Heart left ventricle (tissue), 16 donors: ENCODE measurements at regions of chr5 and their contacts with region 1.

Region 1: DNA sequence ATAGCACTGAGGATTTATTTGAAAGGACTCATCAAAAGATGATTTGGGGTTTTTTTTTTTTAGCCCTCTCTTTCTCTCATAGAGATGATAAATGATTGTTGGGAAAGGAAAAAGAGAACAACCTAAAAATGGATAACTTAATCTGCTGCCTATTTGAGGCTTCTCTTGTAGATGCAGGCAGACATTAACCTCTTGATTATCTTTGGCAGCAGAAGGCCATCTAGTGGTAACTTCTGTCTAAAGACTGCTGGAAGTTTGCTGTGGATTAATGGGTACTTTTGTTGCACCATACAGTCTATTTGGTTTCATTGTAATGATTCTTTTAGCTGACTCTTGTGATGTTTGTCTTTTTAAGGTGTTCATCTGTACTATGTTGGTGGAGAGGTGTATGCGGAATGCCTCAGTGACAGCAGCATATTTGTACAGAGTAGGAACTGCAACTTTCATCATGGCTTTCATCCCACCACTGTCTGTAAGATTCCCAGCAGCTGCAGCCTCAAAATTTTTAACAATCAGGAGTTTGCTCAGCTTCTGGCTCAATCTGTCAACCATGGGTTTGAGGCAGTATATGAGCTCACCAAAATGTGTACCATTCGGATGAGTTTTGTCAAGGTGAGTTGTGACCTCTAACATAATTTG is 18.8 kb downstream of the SMIM32 start:
- DNase-seq: no peak
- ATAC-seq: peak in 2 of 4 donors; percentile 73 to 75
- H3K4me3 ChIP-seq: no peak overlapping the region
- H3K27ac ChIP-seq: no peak overlapping the region
- H3K4me1 ChIP-seq: peaks cover 0 to 3% (median 0%) of the 10 kb centered on the region in 12 donors
- H3K27me3 ChIP-seq: no peaks in the 10 kb centered on the region
- CTCF ChIP-seq: peak; percentile 43 to 76 (median 64)
- POLR2A ChIP-seq: no peak

Region 2: DNA sequence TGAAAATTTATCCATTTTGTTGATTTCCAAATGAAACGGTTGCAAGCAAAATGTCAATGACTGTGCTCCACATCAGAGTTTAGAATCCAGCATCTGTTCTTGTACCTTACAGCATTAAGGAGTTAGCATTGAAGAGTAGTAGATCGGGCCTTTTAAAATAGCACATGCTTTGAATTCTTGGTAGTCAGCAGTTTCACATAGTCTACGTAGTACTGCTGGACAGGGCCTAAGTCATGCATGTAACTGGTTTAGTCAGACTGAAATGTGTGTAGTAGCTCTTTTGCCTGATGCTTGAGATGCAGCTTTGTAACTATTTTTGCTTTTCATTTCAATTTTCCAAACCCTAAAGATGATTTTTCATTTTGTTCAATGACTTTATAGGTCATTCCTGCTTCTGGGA is 239.2 kb before region 1 on chr5:
- intact Hi-C with region 1: loop called in 3 of 10 experiments (anchors 5 to 10 kb)
- DNase-seq: no peak
- ATAC-seq: peak in 2 of 4 donors; percentile 64 to 77
- H3K4me3 ChIP-seq: no peak overlapping the region
- H3K27ac ChIP-seq: no peak overlapping the region
- H3K4me1 ChIP-seq: peaks cover 0 to 9% (median 1%) of the 10 kb centered on the region in 12 donors
- H3K27me3 ChIP-seq: peaks cover 11 to 37% (median 24%) of the 10 kb centered on the region in 9 donors
- CTCF ChIP-seq: no peak
- POLR2A ChIP-seq: no peak

Region 3: GRCh38 chr5:135964670-135965320 is 209.3 kb before region 1 on chr5:
- intact Hi-C with region 1: loop called in 1 of 10 experiments (anchors 5 kb)
- DNase-seq: no peak
- ATAC-seq: peak in 1 of 4 donors; percentile 45
- H3K4me3 ChIP-seq: no peak overlapping the region
- H3K27ac ChIP-seq: no peak overlapping the region
- H3K4me1 ChIP-seq: peaks cover 0 to 5% (median 0%) of the 10 kb centered on the region in 12 donors
- H3K27me3 ChIP-seq: no peaks in the 10 kb centered on the region
- CTCF ChIP-seq: peak in 3 of 12 donors; percentile 6 to 37 (median 12)
- POLR2A ChIP-seq: no peak

Region 4: DNA sequence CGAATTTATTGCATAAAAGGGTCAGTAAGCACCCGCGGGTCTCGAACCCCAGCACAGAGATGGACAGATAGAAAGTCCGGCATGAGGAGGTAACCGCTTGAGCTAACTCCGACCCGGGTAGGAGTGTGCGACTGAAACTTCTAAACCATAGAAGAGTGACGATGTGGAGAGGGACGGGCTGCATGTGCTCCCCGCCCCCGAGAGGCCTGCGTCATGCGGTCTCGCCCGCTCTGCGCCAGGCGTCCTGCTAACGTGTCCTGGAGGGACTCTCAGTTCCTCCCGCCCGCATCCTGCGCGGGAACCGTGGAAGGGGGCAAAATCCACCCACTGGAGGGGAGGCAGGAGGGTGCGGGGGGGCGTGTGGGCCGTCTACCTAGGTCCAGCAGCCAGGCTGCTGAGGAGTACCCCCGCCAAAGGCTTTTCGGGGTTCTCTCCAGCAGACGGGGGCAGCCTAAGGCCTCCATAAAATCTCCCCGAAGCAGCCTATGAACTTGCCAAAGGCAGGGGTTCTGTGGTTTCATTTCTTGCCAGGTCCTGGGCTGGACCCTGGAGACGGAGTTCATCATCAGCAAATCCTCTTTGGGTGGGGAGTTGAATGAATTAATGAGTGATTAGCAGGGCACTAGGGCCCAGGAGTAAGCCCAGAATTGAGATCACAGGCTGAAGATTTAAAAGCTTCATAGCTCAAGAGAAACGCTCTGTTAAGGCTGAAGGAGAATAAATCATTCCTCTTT is 93.5 kb before region 1 on chr5:
- intact Hi-C with region 1: loop called in 7 of 10 experiments (anchors 2 to 10 kb)
- DNase-seq: peak; percentile 86 to 92 (median 89)
- ATAC-seq: peak; percentile 93 to 96 (median 94)
- H3K4me3 ChIP-seq: peak overlapping the region in 11 of 12 donors; percentile 11 to 63 (median 44)
- H3K27ac ChIP-seq: peak overlapping the region; percentile 38 to 87 (median 74)
- H3K4me1 ChIP-seq: peaks cover 0 to 35% (median 12%) of the 10 kb centered on the region in 12 donors
- H3K27me3 ChIP-seq: peaks cover 0 to 8% (median 0%) of the 10 kb centered on the region in 9 donors
- CTCF ChIP-seq: no peak
- POLR2A ChIP-seq: peak in 1 of 2 donors; percentile 44

Region 5: GRCh38 chr5:136132557-136133221 is 41.5 kb before region 1 on chr5 and contains the start of gene SMAD5:
- intact Hi-C with region 1: loop called in 1 of 10 experiments (anchors 5 kb)
- DNase-seq: peak; percentile 97 to 99 (median 98)
- ATAC-seq: peak; percentile 97 to 99 (median 99)
- H3K4me3 ChIP-seq: peak within 1 kb of the TSS; percentile 80 to 95 (median 90)
- H3K27ac ChIP-seq: peak within 1 kb of the TSS; percentile 84 to 100 (median 98)
- H3K4me1 ChIP-seq: peaks cover 7 to 65% (median 39%) of the 10 kb centered on the region in 12 donors
- H3K27me3 ChIP-seq: no peaks in the 10 kb centered on the region
- CTCF ChIP-seq: peak in 1 of 12 donors; percentile 13
- POLR2A ChIP-seq: peak; percentile 36 to 86
- total RNA-seq, gene SMAD5: 24.9 to 53.3 (median 36.4) TPM